ENCODE measurements at regions of chr20 and their contacts with region 1.

Region 1: DNA sequence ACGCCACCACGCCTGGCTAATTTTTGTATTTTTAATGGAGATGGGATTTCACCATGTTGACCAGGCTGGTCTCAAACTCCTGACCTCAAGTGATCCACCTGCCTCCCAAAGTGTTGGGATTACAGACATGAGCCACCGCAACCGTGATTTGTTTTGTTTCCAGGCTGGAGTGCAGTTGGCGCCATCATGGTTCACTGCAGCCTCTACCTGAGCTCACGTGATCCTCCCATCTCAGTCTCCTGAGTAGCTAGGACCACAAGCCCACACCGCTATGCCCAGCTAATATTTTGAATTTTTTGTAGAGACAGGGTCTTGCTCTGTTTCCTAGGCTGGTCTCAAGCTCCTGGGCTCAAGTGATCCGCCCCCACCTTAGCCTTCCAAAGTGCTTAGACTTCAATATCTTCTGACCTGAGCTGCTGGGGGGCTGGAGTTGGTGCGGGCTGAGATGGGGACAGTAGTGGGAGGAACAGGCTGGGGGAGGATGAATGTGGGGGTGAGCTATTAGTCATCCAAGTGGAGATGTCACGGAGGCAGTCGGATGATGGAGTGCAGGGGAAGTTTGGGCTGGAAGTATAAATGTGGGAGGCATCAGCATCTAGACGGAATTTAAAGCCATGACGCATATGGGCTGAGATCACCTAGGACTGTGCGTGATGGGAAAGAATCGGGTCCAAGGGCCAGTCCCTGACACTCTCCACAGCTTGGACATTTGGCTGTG is 23.1 kb upstream of the ZMYND8 start:
- DNase-seq: no peak
- CTCF ChIP-seq: no peak

Region 2: GRCh38 chr20:46978951-46979491 is 400.6 kb before region 1 on chr20:
- CTCF ChIA-PET with region 1: no interaction called
- POLR2A ChIA-PET with region 1: no interaction called
- DNase-seq: no peak
- CTCF ChIP-seq: no peak

Region 3: DNA sequence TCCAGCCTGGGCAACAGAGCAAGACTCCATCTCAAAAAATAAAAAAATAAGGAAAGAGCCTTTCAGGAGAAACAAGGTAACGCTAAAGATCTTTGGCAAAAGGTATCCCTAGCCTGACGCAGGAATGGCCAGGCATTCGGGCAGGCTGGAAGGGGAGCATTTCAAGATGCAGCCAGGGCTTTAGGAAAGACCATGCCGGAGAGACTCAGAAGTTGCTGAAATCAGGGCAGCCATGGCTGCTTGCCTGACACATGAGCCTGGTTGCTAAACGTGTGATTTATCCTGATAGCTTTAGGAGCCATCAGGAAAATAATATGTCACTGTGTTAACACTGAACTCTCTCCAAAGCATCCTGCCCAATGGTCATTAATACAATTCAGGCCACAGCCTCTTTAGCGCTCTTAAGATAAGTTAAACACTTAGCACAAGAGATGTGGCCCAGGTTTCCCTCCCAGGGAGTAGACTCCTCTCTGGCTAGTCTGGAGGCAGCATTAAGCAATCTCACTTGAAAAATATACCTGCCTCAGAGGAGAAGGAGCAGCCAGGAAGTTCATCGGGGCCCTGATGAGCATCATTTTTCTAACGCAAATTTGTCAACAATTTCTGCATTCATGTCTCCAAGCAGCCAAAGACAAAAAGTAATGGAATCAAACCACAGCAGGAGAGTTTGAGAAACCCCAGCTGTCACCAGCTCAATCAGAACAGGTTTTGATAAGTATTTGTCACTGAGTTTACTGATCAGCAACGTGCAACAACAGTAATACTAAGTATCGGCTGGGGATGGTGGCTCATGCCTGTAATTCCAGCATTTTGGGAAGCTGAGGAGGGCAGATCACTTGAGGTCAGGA is 223.1 kb before region 1 on chr20:
- CTCF ChIA-PET with region 1: no interaction called
- POLR2A ChIA-PET with region 1: no interaction called
- DNase-seq: no peak
- CTCF ChIP-seq: no peak

Region 4: DNA sequence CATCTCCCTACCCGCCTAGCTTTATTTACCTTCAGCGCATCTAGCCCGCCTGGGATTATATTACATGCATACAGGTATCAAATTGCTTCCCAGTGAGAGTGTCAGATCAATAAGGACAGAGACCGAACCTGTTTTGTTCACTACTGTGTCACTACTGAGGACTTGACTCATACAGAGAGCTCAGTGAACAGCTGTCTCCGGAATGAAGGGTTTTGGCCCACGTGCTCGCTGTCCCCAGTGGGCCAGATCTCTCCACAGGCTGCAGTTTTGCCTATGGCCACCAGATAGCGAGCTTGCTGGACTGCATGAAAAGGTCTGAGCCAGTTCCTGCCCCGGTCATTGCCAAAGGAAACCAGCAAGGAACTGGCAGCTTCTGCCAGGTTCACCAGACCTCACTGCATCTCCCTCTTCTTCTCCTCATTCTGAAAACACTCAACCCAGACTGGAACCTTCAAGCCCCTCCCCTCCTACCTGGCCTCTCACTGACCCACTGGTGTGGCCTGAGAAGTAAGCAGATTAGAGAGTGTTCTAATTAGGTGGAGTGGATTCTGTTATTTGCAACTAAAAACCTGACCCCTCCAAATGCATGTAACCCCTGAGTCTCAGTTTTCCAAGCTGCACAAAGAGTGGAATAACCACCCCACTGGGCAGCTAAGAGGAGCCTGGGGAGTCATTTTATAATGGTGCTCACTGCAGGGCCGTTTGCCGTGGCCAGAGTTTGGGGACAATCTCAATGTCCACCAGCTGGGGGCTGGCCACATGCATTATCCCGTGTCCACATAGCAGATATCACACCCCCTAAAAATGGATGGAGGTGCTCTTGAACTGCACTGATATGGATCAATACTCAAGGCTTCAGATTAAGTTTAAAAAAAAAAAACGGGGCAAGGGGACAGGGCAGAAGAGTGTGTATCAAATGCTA is 173.8 kb before region 1 on chr20:
- CTCF ChIA-PET with region 1: interaction called, 94 read pairs
- POLR2A ChIA-PET with region 1: no interaction called
- DNase-seq: peak; percentile 70
- CTCF ChIP-seq: peak; percentile 59

Region 5: GRCh38 chr20:47241345-47241781 is 138.2 kb before region 1 on chr20:
- CTCF ChIA-PET with region 1: interaction called, 15 read pairs
- POLR2A ChIA-PET with region 1: no interaction called
- DNase-seq: no peak
- CTCF ChIP-seq: no peak

Region 6: DNA sequence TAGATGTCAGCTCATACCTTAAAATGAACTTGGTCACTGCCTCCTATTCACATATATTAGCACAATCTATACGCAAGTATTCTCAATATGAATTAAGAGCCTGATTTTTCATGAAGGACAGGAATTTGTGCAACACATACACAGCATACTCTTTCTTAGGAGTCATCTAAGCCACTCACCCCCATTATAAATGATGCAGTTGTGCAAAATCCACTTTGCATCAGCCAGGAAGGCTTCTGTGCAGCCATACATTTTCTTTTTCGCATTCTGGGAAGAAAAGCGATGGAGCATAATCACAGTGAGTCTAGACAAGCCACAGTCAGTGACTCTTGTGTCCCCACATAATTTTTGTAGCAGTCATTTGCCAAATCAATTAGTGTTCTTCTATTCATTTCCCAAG is 89.6 kb before region 1 on chr20:
- CTCF ChIA-PET with region 1: interaction called, 23 read pairs
- POLR2A ChIA-PET with region 1: no interaction called
- DNase-seq: no peak
- CTCF ChIP-seq: no peak

Region 7: DNA sequence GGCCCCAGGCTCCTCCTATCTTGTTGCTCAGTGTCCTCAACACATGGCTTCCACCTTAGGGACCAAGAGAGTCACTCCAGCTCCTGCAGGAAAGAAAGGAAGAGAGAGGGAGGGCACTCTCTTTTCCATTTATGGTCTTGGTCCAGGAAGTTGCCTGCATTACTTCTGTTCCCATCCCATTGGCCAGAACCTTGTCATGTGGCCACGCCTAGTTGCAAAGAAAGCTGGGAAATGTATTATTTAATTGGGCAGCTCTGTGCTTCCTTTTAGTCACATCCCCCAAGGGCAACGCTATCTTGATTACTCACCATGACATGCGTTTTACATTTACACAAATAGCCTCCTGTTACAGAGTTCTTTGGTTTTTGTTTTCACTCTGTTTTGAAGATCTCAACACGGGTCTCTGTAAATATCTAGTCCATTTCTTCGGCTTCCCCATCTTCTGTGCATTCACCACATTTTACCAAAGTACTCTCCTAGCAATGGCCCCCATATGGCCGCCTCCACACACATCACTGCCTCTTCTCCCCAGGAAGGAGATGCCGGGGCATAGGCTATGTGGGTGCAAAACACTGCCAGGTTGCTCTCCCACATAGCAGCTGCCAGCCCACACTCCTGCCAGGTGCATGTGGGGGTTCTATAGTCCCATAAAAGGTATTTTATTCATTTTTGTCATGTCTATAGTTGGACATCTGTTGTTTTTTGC is 12.6 kb after region 1 on chr20:
- CTCF ChIA-PET with region 1: interaction called, 29 read pairs
- POLR2A ChIA-PET with region 1: no interaction called
- DNase-seq: peak; percentile 36
- CTCF ChIP-seq: no peak

Region 8: DNA sequence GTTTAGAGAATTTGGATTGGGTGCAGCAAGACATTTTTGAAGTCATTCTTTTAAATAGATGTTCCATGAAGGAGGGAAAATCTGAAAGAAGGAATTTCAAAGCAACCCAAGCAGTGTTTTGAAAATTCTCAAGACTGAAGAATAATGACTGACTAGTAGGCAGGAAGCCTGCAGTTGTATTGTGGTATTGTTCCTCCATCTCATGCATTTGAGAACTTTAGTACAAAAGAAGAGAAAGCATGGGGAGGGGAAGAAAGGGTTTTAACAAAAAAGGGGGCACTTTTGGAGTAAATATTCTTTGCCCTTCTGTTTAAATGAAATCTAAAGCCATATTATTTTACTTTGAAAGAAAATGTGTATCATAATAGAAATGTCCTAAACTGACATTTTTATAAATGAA is 128.7 kb after region 1 on chr20:
- CTCF ChIA-PET with region 1: interaction called, 11 read pairs
- POLR2A ChIA-PET with region 1: no interaction called
- DNase-seq: no peak
- CTCF ChIP-seq: no peak